ENCODE measurements at regions of chr6 and their contacts with region 1.

Region 1: DNA sequence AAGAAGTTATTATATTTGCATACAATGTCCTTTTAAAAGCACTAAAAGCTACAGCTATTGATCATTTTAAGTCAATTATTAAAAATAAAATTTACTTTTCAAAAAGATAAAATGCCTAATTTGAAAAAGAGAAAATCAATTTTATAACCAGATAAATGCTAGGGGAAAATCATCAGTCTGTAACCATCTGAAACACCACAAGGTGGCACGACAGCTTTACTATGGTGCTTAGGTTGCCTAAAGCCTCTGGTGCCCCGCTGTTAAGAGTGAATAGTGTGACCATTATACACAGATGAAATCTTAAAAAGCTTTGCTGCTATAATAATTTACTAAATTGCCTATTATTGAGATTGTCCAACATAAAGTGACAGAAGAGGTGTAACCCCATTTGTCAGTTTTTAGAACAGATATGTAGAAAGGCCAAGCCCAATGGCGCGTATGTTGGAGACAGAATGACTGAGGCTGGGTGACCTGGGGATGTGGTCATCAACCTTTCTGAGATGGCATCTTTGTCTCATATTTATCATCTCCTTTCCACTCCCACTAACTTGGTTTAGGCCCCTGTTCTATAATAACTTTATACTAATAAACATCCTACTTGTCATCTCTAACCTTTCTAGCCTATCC is 100.8 kb downstream of the MOXD1 start:
- DNase-seq: peak; percentile 62
- H3K4me3 ChIP-seq: no peak overlapping the region
- H3K27ac ChIP-seq: no peak overlapping the region
- H3K4me1 ChIP-seq: no peaks in the 10 kb centered on the region
- H3K27me3 ChIP-seq: peaks cover 23% of the 10 kb centered on the region
- CTCF ChIP-seq: peak; percentile 71

Region 2: DNA sequence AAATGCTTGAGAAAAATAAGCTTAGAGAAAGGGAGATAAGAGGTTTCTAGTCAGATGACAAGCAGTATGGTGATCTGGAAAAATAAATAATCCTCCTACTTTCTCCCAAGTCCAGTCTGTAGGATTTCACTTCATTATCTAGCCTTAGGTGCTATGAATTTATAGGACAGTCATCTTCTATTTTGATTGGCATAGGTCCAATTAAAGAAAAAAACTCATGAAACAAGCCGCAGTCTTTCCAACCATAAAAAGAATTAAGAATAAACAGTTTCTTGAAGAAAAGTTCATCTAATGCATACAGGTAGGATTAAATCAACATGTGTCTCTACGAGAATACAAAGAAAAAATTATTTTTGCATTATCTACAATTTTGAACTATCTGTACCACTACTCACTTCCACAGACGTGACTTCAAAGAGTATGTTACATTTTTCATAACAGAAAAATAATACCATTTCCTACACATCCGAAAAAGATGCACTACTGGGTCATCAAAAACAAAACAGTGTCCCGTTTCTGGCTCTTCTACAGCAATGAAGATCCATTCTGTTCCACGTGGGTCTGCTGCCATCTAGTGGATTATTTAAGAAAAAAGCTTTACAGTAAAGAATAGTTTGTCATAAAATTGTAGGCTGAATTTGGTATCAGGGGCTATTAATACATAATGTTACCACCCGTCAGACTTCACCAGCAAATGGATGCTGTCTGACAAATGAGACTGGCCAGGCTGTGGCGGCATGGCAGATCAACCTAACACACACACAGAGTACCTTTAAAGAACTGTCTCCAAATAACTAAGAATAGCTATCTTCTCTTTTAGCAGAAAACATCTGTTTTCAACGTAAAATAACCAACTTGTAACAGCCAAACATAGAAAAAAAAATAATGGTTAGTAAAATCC is 183.6 kb after region 1 on chr6:
- CTCF ChIA-PET with region 1: interaction called, 10 read pairs
- POLR2A ChIA-PET with region 1: no interaction called
- intact Hi-C with region 1: loop called (anchors 1 kb)
- DNase-seq: peak; percentile 76
- H3K4me3 ChIP-seq: no peak overlapping the region
- H3K27ac ChIP-seq: no peak overlapping the region
- H3K4me1 ChIP-seq: peaks cover 2% of the 10 kb centered on the region
- H3K27me3 ChIP-seq: no peaks in the 10 kb centered on the region
- CTCF ChIP-seq: peak; percentile 70